Thyroid gland (tissue), 4 donors: ENCODE measurements at regions of chr15 and their contacts with region 1.

Region 1: DNA sequence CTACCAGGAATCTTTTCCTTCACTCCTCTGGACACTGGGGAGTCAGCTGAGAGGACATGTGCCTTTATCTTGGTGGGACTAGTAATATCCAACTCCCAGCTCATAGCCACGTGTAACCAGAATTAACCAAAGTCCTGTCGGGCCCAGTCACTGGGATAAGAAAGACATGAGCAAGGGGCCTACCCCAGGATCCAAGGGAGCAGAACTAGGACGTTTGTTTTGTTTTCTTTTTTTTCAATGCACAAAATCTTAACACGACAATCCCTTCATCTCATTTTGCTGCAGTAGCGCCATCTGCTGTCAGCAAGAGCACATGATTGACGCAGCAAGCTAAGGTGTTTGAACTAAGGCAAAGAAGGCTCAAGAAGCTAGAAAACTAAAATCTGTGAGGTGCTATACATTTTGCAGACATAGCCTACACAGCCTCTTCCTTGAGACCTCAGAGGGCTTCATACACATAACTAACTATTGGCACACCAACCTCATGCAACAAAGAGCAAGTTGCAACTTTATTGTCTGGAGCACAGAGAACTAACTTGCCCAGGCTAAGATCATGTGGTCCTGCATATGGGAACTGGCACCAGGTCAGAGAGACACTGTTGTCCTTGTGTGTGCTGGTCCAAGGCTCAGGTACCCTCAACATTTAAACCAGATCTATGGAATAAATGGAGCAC is 43.6 kb downstream of the RLBP1 start:
- DNase-seq: peak; percentile 63 to 71
- H3K4me3 ChIP-seq: no peak overlapping the region
- H3K27ac ChIP-seq: no peak overlapping the region
- H3K4me1 ChIP-seq: peaks cover 0 to 5% of the 10 kb centered on the region in 2 donors
- H3K27me3 ChIP-seq: no peaks in the 10 kb centered on the region
- CTCF ChIP-seq: peak; percentile 37 to 83 (median 80)
- POLR2A ChIP-seq: no peak

Region 2: DNA sequence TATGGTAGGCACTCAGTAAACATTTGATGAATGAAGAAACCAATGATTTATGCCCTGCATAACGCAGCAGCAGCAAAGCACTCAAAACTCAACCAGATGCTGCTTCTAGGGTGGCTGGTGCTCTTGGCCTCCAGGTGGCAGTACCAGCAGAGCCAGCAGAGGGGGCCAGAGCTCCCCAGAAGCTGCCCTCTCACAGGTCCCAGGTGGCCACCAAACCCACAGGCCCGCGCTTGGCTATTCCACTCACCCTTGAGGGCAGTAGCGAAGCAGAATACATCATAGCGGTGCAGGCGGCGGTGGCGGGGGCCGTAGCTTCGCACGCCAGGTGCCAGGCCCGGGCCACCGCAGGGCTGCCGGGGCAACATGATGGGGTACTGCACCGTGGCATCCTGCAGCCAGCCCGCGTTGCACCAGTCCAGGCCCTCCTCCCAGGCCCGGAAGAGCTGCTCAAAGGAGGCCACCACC is 299.0 kb before region 1 on chr15:
- intact Hi-C with region 1: no loop called
- DNase-seq: peak; percentile 31 to 45
- H3K4me3 ChIP-seq: no peak overlapping the region
- H3K27ac ChIP-seq: no peak overlapping the region
- H3K4me1 ChIP-seq: no peaks in the 10 kb centered on the region
- H3K27me3 ChIP-seq: no peaks in the 10 kb centered on the region
- CTCF ChIP-seq: peak in 5 of 6 experiments; percentile 4 to 56 (median 33)
- POLR2A ChIP-seq: no peak

Region 3: DNA sequence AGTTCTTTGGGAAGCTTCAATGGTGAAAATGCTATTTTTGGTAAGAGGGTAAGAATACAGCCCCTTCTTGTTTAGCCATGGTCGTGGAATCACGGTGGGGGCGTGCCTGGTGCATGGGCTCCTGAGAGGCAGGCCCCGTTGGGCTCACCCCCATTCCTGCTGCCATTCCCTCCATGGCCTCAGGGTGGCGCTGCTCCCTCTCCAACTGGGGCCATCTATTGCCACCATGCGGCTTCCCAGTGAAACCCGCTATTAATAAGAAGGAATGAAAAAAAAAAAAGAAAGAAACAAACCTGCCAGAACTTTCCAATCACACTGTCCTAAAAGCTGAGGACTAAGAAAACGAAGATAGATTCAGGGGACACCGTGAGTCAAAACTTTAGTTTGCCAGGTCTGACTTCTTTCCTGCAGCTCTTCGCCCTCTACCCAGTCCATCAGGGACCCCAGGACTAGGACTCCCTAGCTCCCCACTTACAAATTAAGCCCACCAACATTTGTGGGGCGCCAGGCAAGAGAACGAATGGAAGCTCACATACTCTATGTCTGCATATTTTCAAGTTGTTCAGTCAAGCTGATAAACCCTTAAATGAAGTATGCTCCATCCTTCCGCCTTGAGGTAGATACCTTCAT is 120.2 kb before region 1 on chr15:
- intact Hi-C with region 1: loop called (anchors 5 kb)
- DNase-seq: peak; percentile 75 to 79
- H3K4me3 ChIP-seq: no peak overlapping the region
- H3K27ac ChIP-seq: no peak overlapping the region
- H3K4me1 ChIP-seq: peaks cover 0 to 5% of the 10 kb centered on the region in 2 donors
- H3K27me3 ChIP-seq: no peaks in the 10 kb centered on the region
- CTCF ChIP-seq: peak; percentile 90 to 99 (median 96)
- POLR2A ChIP-seq: no peak